Spleen (tissue), 13 donors: ENCODE measurements at regions of chr12 and their contacts with region 1.

Region 1: GRCh38 chr12:6563448-6564050 is 4.5 kb downstream of the NOP2 start:
- DNase-seq: peak; percentile 83
- H3K4me3 ChIP-seq: no peak overlapping the region
- H3K27ac ChIP-seq: no peak overlapping the region
- H3K4me1 ChIP-seq: peaks cover 5 to 55% (median 20%) of the 10 kb centered on the region in 6 donors
- H3K27me3 ChIP-seq: no peaks in the 10 kb centered on the region
- CTCF ChIP-seq: peak; percentile 48 to 87 (median 76)
- POLR2A ChIP-seq: no peak

Region 2: GRCh38 chr12:6851921-6852650 is 288.5 kb after region 1 on chr12 and contains the start of gene USP5:
- intact Hi-C with region 1: loop called (anchors 10 kb)
- DNase-seq: peak; percentile 100
- H3K4me3 ChIP-seq: peak within 1 kb of the TSS; percentile 49 to 95 (median 68)
- H3K27ac ChIP-seq: peak within 1 kb of the TSS; percentile 82 to 98 (median 97)
- H3K4me1 ChIP-seq: peaks cover 14 to 45% (median 25%) of the 10 kb centered on the region in 6 donors
- H3K27me3 ChIP-seq: no peaks in the 10 kb centered on the region
- CTCF ChIP-seq: peak in 7 of 11 experiments; percentile 3 to 52 (median 18)
- POLR2A ChIP-seq: peak in 1 of 3 donors; percentile 79
- total RNA-seq, gene USP5: 29.8 to 62.4 (median 53.5) TPM